Posterior vena cava (tissue), 2 donors: ENCODE measurements at regions of chr5 and their contacts with region 1.

Region 1: DNA sequence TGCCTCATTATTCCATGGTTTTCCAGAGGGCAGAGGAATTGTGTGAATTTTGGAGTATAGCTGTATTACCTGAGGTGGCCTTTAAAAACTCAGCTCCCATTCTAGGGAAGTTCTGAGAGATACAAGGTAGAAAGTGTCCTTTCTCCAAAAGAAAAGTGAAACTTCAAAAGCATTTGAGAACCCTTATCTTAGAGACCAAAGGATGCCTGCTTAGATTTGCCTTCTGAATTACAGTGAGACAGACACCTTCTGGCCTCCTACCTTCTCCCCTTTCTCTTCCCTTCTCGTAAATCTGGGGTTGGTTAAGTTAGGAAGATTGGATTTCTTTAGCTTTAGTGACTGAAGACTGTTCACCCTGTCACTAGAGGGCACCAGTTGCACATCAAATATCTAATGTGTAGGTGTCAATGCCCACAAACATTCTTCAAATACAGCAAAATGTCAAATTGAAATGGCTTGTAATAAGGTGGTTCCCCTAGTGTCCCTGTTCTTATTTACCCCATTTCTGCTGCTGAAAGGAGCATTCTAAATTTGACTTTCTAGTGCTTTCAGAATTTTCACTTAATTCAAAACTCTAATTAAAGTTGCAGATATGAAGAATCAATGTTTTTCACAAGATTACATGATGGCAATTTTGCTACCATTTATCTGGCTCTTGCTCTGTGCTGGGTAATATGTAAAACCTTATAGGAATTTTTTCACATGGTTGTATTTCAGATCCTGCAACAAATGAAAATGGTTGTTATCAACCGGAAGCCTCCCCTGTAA is 46.7 kb downstream of the PRRC1 start:
- DNase-seq: no peak

Region 2: DNA sequence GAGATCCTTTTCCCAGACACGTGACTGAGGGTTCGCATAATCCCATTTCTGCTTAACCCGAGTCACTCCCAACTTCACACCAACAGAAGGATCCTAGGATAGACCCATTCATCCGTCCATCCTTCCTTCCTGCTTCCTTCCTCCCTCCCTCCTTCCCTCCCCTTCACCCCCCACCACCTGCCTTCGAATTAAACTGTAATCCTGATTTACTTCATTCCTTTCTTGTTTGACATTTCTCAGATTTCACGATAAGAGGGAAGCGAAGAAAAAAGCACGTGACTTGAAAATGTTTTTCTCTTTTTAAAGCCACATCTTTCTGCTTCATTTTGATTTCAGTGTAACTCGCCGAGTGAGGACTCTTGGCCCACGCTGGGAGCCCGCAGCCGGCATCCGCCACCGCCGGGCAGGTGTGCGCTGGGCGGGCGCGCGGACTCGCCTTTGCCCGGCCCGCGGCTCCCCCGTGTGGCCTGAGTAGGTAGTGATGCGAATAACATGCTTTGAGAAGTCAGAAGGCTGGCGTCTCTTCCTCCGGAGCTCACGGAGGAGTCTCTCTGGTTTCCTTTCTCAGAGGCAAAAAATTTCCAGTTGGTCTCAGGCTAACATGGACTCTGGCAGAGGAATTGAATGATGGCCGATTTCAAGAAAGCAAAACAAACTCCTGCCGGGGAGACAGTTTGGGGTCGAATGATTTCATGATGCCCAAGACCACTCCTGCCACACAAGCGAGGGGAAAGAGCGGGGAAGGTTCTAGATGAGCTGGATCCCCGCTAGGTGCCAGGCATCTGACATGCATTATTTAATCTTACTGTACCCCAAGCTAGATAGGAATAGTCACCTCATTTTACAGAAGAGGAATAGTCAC is 637.1 kb after region 1 on chr5:
- intact Hi-C with region 1: loop called in 1 of 2 experiments (anchors 10 kb)
- DNase-seq: peak; percentile 92